Transverse colon (tissue), 4 donors: ENCODE measurements at regions of chr12 and their contacts with region 1.

Region 1: GRCh38 chr12:94721173-94721572 is 70.8 kb upstream of the TMCC3 start:
- DNase-seq: no peak
- H3K4me3 ChIP-seq: no peak overlapping the region
- H3K27ac ChIP-seq: no peak overlapping the region
- H3K4me1 ChIP-seq: no peaks in the 10 kb centered on the region
- H3K27me3 ChIP-seq: no peaks in the 10 kb centered on the region
- CTCF ChIP-seq: no peak
- EP300 ChIP-seq: no peak
- POLR2A ChIP-seq: no peak

Region 2: GRCh38 chr12:94674835-94675234 is 46.3 kb before region 1 on chr12:
- in situ Hi-C with region 1: no loop called
- intact Hi-C with region 1: loop called (anchors 1 kb)
- DNase-seq: peak; percentile 30
- H3K4me3 ChIP-seq: no peak overlapping the region
- H3K27ac ChIP-seq: no peak overlapping the region
- H3K4me1 ChIP-seq: peaks cover 0 to 28% (median 0%) of the 10 kb centered on the region in 4 donors
- H3K27me3 ChIP-seq: no peaks in the 10 kb centered on the region
- CTCF ChIP-seq: no peak
- EP300 ChIP-seq: no peak
- POLR2A ChIP-seq: no peak